ENCODE measurements at regions of chr11 and their contacts with region 1.

Region 1: GRCh38 chr11:94794287-94795168 is 26.4 kb downstream of the AMOTL1 start:
- DNase-seq: peak; percentile 93
- H3K4me3 ChIP-seq: peak overlapping the region in 2 of 3 experiments; percentile 4 to 15
- H3K27ac ChIP-seq: peak overlapping the region; percentile 90
- H3K4me1 ChIP-seq: peaks cover 44% of the 10 kb centered on the region
- H3K27me3 ChIP-seq: no peaks in the 10 kb centered on the region
- CTCF ChIP-seq: no peak
- POLR2A ChIP-seq: no peak

Region 2: GRCh38 chr11:94183886-94184264 is 610.7 kb before region 1 on chr11:
- CTCF ChIA-PET with region 1: no interaction called
- POLR2A ChIA-PET with region 1: no interaction called
- dilution Hi-C with region 1: no loop called
- intact Hi-C with region 1: no loop called
- DNase-seq: peak; percentile 71
- H3K4me3 ChIP-seq: no peak overlapping the region
- H3K27ac ChIP-seq: no peak overlapping the region
- H3K4me1 ChIP-seq: no peaks in the 10 kb centered on the region
- H3K27me3 ChIP-seq: no peaks in the 10 kb centered on the region
- CTCF ChIP-seq: peak; percentile 84 to 89
- POLR2A ChIP-seq: no peak

Region 3: GRCh38 chr11:94731880-94732601 is 62.5 kb before region 1 on chr11:
- CTCF ChIA-PET with region 1: no interaction called
- POLR2A ChIA-PET with region 1: no interaction called
- dilution Hi-C with region 1: no loop called
- intact Hi-C with region 1: loop called (anchors 1 kb)
- DNase-seq: peak; percentile 38
- H3K4me3 ChIP-seq: no peak overlapping the region
- H3K27ac ChIP-seq: peak overlapping the region; percentile 79
- H3K4me1 ChIP-seq: peaks cover 35% of the 10 kb centered on the region
- H3K27me3 ChIP-seq: no peaks in the 10 kb centered on the region
- CTCF ChIP-seq: no peak
- POLR2A ChIP-seq: no peak

Region 4: DNA sequence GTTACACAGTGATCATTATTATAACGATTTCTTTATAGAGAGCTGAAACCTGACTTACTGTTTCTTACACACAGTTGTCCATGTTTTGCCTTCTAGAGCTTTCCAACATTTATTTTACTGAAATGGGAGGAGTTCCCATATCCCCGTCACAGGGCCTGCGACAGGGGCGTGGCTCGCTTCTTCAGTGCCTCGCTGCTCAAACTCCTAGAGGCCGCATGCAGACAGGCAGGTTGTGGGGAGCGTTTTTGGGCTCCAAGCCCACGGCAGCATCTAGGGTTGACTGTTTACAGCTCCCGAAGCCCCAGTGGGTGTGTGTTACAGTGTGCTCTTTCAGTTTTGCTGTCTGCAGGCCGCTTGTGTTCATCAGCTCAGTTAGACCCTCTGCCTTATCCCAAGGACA is 39.0 kb before region 1 on chr11:
- CTCF ChIA-PET with region 1: no interaction called
- POLR2A ChIA-PET with region 1: no interaction called
- dilution Hi-C with region 1: no loop called
- intact Hi-C with region 1: no loop called
- DNase-seq: no peak
- H3K4me3 ChIP-seq: no peak overlapping the region
- H3K27ac ChIP-seq: no peak overlapping the region
- H3K4me1 ChIP-seq: peaks cover 16% of the 10 kb centered on the region
- H3K27me3 ChIP-seq: no peaks in the 10 kb centered on the region
- CTCF ChIP-seq: no peak
- POLR2A ChIP-seq: no peak

Region 5: DNA sequence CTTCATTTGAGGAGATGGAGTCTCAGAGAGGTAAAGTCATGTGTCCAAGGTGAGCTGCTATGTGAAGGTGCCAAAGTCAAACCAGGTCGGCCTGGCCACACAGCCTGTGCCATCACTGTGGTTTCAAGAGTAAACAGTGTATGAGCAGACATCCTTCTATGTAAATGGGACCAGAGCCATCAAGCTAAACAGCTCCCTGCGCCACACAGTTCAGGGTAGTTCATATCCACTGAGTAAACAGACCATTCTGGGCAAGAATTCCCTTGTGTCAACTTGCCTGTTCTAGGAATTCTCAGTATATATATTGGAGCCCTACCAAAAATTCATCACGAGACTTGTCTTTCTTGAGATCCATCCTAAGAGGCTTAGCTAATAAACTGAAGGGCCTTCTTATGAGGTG is 51.1 kb after region 1 on chr11:
- CTCF ChIA-PET with region 1: no interaction called
- POLR2A ChIA-PET with region 1: no interaction called
- dilution Hi-C with region 1: no loop called
- intact Hi-C with region 1: no loop called
- DNase-seq: no peak
- H3K4me3 ChIP-seq: no peak overlapping the region
- H3K27ac ChIP-seq: no peak overlapping the region
- H3K4me1 ChIP-seq: no peaks in the 10 kb centered on the region
- H3K27me3 ChIP-seq: no peaks in the 10 kb centered on the region
- CTCF ChIP-seq: no peak
- POLR2A ChIP-seq: no peak

Region 6: DNA sequence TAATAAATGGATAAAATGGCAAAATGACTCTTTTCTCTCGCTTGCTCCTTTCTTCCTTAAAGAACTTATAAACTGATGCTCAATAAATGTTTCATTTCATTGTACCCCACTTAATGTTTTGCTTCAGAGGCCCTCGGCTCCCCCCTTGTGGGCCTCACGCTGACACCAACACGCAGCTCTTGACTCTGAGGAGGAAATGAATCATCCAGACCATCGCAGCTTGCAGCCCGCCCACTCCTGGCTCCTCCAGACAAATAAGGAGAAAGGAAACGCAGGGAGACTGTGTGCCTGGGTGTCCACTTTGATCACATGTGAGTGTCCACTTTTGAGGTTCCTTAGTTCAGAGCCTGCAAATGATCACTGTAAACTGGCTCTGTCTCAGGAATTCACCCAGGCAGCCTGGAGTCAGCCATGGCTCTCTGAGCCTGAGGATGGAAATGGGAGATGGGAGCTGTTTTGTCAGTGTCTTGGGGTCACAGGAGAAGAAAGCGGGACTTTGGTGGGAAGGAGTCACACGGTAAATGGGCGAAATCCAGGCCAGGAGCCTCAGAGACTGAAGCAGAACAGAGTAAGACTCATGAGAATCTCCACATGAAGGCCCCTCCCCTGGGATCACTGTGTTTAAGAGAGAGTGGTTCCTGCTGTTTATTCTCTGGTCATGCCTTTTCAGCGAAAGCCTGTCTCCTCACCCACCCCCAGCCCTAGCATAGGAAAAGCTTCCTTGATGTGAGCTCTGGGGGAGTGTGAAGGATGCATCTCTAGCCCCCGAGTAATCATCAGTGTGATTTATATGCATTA is 82.3 kb after region 1 on chr11:
- CTCF ChIA-PET with region 1: no interaction called
- POLR2A ChIA-PET with region 1: no interaction called
- dilution Hi-C with region 1: no loop called
- intact Hi-C with region 1: loop called (anchors 1 kb)
- DNase-seq: peak; percentile 94
- H3K4me3 ChIP-seq: no peak overlapping the region
- H3K27ac ChIP-seq: peak overlapping the region; percentile 75
- H3K4me1 ChIP-seq: peaks cover 14% of the 10 kb centered on the region
- H3K27me3 ChIP-seq: no peaks in the 10 kb centered on the region
- CTCF ChIP-seq: peak; percentile 28 to 32
- POLR2A ChIP-seq: no peak

Measured in endothelial cell of umbilical vein (primary cell).